GM12878 (cell line): ENCODE measurements at regions of chr3 and their contacts with region 1.

Region 1: DNA sequence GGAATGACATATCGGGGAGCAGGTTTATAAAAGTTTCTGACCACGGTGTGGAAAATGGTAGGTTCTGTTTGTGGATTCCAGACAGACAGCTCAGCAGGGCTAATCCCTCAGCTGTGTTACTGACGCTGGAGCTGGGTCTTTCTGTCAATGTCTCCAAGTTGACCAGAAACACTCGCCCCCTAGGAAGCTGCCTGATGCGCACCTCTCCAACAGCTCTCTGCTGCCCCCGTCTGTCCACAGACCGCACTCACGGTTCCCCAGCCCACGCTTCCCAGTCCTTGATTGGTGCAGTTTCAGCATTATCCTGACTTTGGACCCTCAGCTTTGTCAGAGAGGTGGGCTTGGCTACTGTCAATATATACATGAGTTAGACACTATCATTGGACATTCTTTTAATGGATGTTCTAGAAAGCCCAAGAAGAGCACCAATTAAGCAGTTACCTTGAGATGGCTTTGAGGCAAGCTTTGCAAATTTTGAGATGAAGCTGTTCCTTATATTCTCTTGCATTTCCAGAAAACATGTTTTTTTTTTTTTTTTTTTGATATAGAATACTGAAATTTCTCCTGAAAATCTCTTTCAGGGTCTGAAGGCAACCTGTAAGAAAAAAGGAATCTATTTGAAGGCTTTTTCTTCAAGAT is 98.9 kb upstream of the TBC1D5 start:
- DNase-seq: peak; percentile 24
- ATAC-seq: peak; percentile 99
- H3K4me3 ChIP-seq: no peak overlapping the region
- H3K27ac ChIP-seq: no peak overlapping the region
- H3K4me1 ChIP-seq: no peaks in the 10 kb centered on the region
- H3K27me3 ChIP-seq: no peaks in the 10 kb centered on the region
- CTCF ChIP-seq: peak; percentile 96 to 97 (median 97)
- EP300 ChIP-seq: no peak
- POLR2A ChIP-seq: no peak
- RAD21 ChIP-seq: peak; percentile 98

Region 2: DNA sequence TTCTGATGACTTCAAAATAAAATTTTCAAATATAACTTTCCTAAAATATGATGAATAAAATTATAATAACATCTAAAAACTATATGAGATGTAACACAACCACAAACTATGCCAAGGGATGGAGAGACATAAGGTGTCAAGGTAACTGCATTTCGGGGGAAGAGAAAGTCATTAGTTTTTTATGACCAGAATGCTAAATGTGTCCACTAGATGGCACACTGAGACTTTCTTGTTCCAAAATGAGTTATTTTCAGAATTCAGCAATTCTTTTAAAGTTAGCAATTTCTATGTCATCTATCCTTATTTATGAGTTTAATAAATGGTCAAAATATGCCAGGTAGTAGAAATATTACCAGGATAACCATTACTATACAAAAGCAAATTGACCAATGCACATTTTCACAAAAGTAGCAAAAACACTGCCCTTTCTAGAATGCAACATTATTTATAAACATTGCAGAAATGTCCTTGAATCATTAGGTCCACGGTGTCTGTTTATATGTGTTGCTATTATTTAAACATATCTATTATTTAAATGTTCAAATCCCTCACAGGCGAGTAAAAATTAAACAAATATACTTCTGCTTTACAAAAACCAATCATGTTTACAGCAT is 582.4 kb before region 1 on chr3:
- CTCF ChIA-PET with region 1: interaction called, 19 read pairs
- POLR2A ChIA-PET with region 1: no interaction called
- RAD21 ChIA-PET with region 1: interaction called, 6 read pairs
- SMC1A ChIA-PET with region 1: interaction called, 6 read pairs
- in situ Hi-C with region 1: loop called (anchors 10 kb)
- intact Hi-C with region 1: loop called (anchors 2 kb)
- DNase-seq: no peak
- ATAC-seq: peak; percentile 49; the same call in 2 of the 3 replicates
- H3K4me3 ChIP-seq: no peak overlapping the region
- H3K27ac ChIP-seq: no peak overlapping the region
- H3K4me1 ChIP-seq: no peaks in the 10 kb centered on the region
- H3K27me3 ChIP-seq: no peaks in the 10 kb centered on the region
- CTCF ChIP-seq: peak; percentile 54 to 70 (median 65)
- EP300 ChIP-seq: no peak
- POLR2A ChIP-seq: no peak
- RAD21 ChIP-seq: peak; percentile 75

Region 3: DNA sequence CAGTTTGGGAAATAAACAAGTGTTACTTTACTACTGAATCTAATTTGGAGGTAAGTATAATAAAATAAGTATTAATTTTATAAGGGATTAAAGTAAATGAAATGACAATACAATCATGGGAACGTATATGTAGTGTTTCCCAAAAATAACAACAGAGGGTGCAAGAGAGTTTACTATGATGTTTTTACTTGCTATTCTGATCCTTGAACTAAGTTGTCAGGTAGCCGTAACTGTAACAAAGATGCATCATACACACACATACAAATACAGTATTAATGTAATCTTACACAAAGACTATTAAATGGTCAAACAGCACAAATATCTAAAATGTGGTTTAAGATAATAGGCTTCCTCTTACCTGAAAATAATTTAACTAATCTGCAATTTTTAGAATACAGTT is 410.3 kb before region 1 on chr3:
- CTCF ChIA-PET with region 1: interaction called, 67 read pairs
- POLR2A ChIA-PET with region 1: no interaction called
- RAD21 ChIA-PET with region 1: interaction called, 61 read pairs
- SMC1A ChIA-PET with region 1: interaction called, 58 read pairs
- in situ Hi-C with region 1: loop called (anchors 5 kb)
- intact Hi-C with region 1: loop called (anchors 1 kb)
- DNase-seq: no peak
- ATAC-seq: peak; percentile 65
- H3K4me3 ChIP-seq: no peak overlapping the region
- H3K27ac ChIP-seq: no peak overlapping the region
- H3K4me1 ChIP-seq: no peaks in the 10 kb centered on the region
- H3K27me3 ChIP-seq: no peaks in the 10 kb centered on the region
- CTCF ChIP-seq: peak; percentile 14 to 53 (median 34); a peak in 4 of 6 replicates
- EP300 ChIP-seq: no peak
- POLR2A ChIP-seq: no peak
- RAD21 ChIP-seq: peak; percentile 60

Region 4: GRCh38 chr3:17500618-17501017 is 340.7 kb before region 1 on chr3:
- CTCF ChIA-PET with region 1: no interaction called
- POLR2A ChIA-PET with region 1: no interaction called
- RAD21 ChIA-PET with region 1: no interaction called
- SMC1A ChIA-PET with region 1: no interaction called
- in situ Hi-C with region 1: no loop called
- intact Hi-C with region 1: no loop called
- DNase-seq: no peak
- ATAC-seq: no peak
- H3K4me3 ChIP-seq: no peak overlapping the region
- H3K27ac ChIP-seq: no peak overlapping the region
- H3K4me1 ChIP-seq: no peaks in the 10 kb centered on the region
- H3K27me3 ChIP-seq: no peaks in the 10 kb centered on the region
- CTCF ChIP-seq: no peak
- EP300 ChIP-seq: no peak
- POLR2A ChIP-seq: no peak
- RAD21 ChIP-seq: no peak

Region 5: GRCh38 chr3:17639765-17640164 is 201.5 kb before region 1 on chr3:
- CTCF ChIA-PET with region 1: interaction called, 120 read pairs
- POLR2A ChIA-PET with region 1: no interaction called
- RAD21 ChIA-PET with region 1: interaction called, 44 read pairs
- SMC1A ChIA-PET with region 1: interaction called, 61 read pairs
- in situ Hi-C with region 1: no loop called
- intact Hi-C with region 1: no loop called
- DNase-seq: no peak
- ATAC-seq: peak; percentile 46; the same call in 1 of the 3 replicates
- H3K4me3 ChIP-seq: no peak overlapping the region
- H3K27ac ChIP-seq: no peak overlapping the region
- H3K4me1 ChIP-seq: no peaks in the 10 kb centered on the region
- H3K27me3 ChIP-seq: no peaks in the 10 kb centered on the region
- CTCF ChIP-seq: no peak
- EP300 ChIP-seq: no peak
- POLR2A ChIP-seq: no peak
- RAD21 ChIP-seq: no peak

Region 6: DNA sequence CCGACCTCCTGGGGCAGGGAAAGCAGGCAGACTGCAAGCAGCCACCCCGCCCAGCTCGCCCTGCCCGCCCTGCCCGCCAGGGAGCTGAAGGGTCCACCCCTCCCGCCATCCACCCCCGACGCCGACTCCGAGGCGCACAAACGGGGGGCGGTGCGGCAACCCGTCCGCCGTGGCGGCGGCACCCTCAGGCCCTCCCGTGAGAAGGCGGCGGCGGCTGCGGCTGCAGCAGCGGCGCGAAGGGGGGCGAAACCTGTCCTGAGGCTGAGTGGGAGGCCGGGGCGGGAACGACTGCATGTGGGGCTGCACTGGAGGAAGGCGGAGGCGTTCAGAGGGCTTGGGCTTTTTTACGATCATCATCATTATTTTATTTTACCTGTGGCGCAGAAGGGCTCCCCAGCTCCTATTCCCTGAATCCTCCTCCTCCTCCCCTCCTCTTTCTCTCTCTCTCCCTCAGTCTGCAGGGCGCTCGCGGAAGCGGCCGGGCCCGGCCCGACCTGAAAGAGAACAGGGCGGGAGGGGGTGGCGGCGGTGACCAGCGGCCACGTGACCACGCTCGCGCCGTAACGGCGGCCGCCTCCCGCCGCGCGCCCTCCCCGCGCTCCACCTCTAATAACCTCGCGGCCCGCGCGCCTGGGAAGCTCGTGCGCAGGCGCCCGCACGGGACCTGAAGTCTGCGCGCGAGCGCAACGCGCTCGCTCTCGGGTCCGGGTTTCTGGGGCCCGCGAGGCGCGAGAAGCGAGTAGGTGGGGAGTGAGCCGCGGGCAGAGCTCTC is 99.0 kb before region 1 on chr3 and contains the start of gene TBC1D5:
- CTCF ChIA-PET with region 1: interaction called, 9 read pairs
- POLR2A ChIA-PET with region 1: interaction called, 5 read pairs
- RAD21 ChIA-PET with region 1: interaction called, 3 read pairs
- SMC1A ChIA-PET with region 1: interaction called, 4 read pairs
- in situ Hi-C with region 1: no loop called
- intact Hi-C with region 1: loop called (anchors 2 kb)
- DNase-seq: peak; percentile 91
- ATAC-seq: peak; percentile 82
- H3K4me3 ChIP-seq: peak within 1 kb of the TSS; percentile 94
- H3K27ac ChIP-seq: peak within 1 kb of the TSS; percentile 94
- H3K4me1 ChIP-seq: peaks cover 13% of the 10 kb centered on the region
- H3K27me3 ChIP-seq: no peaks in the 10 kb centered on the region
- CTCF ChIP-seq: peak in 1 of 3 experiments; percentile 6; a peak in 1 of 6 replicates
- EP300 ChIP-seq: no peak
- POLR2A ChIP-seq: peak; percentile 90
- RAD21 ChIP-seq: no peak
- polyA plus RNA-seq, gene TBC1D5: 5.5 to 5.8 TPM

Region 7: DNA sequence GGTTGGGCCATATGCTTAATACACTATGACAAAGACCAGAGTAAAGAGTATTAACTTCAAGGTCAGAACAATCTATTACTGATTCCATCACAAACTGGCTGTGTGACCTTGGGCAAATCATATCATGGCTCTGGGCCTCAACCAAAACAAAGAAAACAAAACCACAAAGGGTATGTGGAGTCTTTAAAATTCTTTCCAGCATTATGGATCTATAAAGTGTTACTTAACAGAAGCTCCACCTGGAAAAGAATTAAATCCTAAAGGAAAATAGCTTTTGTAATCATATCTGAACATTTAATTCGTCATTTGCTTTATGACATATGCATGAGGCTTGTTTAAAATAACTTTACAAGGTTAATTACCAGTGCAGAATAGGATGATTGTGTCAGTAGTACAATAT is 318.4 kb after region 1 on chr3:
- CTCF ChIA-PET with region 1: no interaction called
- POLR2A ChIA-PET with region 1: no interaction called
- RAD21 ChIA-PET with region 1: no interaction called
- SMC1A ChIA-PET with region 1: no interaction called
- in situ Hi-C with region 1: no loop called
- intact Hi-C with region 1: no loop called
- DNase-seq: no peak
- ATAC-seq: no peak
- H3K4me3 ChIP-seq: no peak overlapping the region
- H3K27ac ChIP-seq: no peak overlapping the region
- H3K4me1 ChIP-seq: no peaks in the 10 kb centered on the region
- H3K27me3 ChIP-seq: no peaks in the 10 kb centered on the region; a peak in 2 of 4 replicates
- CTCF ChIP-seq: no peak
- EP300 ChIP-seq: no peak
- POLR2A ChIP-seq: no peak
- RAD21 ChIP-seq: no peak